Activated naive CD4-positive, alpha-beta T cell treated with anti-CD3 and anti-CD28 coated beads for 36 hours (primary cell): ENCODE measurements at regions of chr18 and their contacts with region 1.

Region 1: DNA sequence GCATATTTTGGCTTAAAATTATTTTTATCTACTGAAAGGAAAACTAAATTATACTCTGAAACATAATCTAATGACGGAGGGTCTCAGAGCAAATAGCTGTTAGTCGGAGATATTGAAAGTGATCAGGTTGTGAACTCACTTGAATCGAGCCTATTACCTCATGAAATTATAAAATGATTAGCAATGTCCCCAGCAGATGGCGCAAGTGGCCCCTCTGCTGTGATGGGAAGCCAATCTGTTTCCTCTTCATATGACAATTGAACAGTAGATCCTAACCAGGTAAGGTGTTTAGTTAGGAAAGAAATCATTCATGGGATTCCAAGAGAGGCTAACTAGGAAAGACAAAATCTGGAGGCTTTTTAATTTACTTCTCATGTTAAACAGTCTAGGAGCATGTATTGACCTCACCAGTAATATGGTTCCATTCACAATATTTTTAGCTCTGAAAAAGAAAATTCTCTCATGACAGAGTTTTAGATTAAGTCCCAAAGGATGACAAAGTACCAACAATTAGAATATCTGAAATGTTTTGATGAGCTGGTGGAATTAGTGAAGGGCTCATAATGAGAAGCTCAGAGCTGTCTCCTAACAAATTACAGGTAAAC is 29.9 kb upstream of the MPPE1 start:
- DNase-seq: peak; percentile 86
- H3K4me3 Mint-ChIP-seq: no peak overlapping the region
- H3K27ac Mint-ChIP-seq: no peak overlapping the region
- H3K4me1 Mint-ChIP-seq: no peaks in the 10 kb centered on the region
- H3K27me3 Mint-ChIP-seq: no peaks in the 10 kb centered on the region

Region 2: DNA sequence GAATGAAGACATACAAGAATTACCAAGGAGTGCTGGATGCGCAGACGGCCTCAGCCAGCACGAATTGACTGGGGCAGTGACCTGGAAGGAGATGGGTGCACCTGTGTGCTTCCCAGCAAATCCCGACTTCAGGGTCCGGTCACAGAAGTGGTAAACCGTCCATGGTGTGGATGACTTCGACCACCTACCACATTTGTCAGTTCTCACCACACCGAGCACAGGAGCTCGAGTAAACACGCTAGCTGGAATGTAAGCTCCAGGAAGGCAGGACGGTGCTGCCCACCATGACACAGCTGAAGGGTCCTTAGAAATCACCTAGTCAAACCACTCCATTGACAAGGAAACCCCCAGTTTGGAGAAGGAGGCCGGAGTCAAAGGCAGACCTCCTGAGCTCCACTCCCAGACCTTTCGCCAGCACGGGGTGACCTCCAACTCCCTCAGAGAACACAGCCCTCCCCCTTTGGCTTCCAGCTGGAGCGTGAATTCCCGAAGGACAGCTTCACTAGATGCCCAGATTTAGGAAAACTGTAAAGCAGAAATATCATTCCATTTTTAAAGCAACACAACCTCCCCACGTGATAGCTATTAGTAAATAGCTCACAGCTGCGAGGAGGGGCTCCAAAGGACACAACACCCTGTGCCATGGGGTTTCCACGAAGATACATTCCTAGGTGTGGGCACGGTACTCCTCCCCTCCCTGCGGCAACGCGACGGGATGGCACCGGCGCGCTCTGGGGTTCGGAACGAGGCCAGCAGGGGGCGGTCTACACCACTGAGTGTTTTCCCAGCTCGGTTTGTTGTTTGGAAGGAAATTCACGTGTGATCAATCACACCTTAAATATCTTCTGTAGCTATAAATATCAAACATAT is 283.0 kb before region 1 on chr18:
- CTCF ChIA-PET with region 1: interaction called, 8 read pairs
- intact Hi-C with region 1: loop called (anchors 5 kb)
- DNase-seq: peak; percentile 71
- H3K4me3 Mint-ChIP-seq: no peak overlapping the region
- H3K27ac Mint-ChIP-seq: no peak overlapping the region
- H3K4me1 Mint-ChIP-seq: peaks cover 6% of the 10 kb centered on the region
- H3K27me3 Mint-ChIP-seq: peaks cover 39% of the 10 kb centered on the region

Region 3: GRCh38 chr18:11676867-11677266 is 261.1 kb before region 1 on chr18:
- CTCF ChIA-PET with region 1: no interaction called
- intact Hi-C with region 1: no loop called
- DNase-seq: no peak
- H3K4me3 Mint-ChIP-seq: no peak overlapping the region
- H3K27ac Mint-ChIP-seq: no peak overlapping the region
- H3K4me1 Mint-ChIP-seq: no peaks in the 10 kb centered on the region
- H3K27me3 Mint-ChIP-seq: peaks cover 26% of the 10 kb centered on the region

Region 4: GRCh38 chr18:11752116-11752911 is 185.7 kb before region 1 on chr18:
- CTCF ChIA-PET with region 1: no interaction called
- intact Hi-C with region 1: no loop called
- DNase-seq: peak; percentile 46
- H3K4me3 Mint-ChIP-seq: peak overlapping the region; percentile 70
- H3K27ac Mint-ChIP-seq: no peak overlapping the region
- H3K4me1 Mint-ChIP-seq: peaks cover 9% of the 10 kb centered on the region
- H3K27me3 Mint-ChIP-seq: peaks cover 53% of the 10 kb centered on the region

Region 5: GRCh38 chr18:11785458-11786055 is 152.4 kb before region 1 on chr18:
- CTCF ChIA-PET with region 1: no interaction called
- intact Hi-C with region 1: no loop called
- DNase-seq: no peak
- H3K4me3 Mint-ChIP-seq: no peak overlapping the region
- H3K27ac Mint-ChIP-seq: no peak overlapping the region
- H3K4me1 Mint-ChIP-seq: no peaks in the 10 kb centered on the region
- H3K27me3 Mint-ChIP-seq: peaks cover 2% of the 10 kb centered on the region

Region 6: DNA sequence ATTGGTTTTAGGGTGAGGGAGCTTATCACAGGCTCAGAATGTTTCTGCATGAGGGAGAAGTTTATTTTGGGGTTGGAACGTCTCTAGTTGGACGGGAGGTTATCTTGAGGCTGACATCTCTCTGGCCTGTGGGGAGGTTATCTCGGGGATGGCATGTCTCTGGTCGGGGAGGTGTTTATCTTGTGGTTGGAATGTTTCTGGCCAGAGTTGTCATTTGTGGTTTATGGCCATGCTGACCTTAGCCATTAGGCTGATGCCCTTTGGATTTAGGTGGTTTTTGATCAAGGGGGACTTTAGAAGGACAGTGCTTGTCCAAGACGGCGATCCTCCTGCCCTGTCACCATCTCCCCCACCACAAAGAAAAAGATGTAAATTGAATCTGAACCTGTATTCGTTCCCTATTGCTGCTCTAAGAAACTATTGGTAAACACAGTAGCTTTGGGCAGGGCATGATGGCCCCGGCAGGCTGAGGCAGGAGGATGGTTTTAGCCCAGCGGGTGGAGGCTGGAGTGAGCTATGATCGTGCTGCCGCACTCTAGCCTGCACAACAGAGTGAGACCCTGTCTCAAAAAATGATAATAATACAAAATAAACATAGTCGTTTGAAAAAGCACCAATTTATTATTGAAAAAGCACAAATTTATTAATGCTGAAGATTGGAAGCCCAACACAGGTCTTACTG is 12.0 kb before region 1 on chr18:
- CTCF ChIA-PET with region 1: interaction called, 25 read pairs
- intact Hi-C with region 1: no loop called
- DNase-seq: no peak
- H3K4me3 Mint-ChIP-seq: no peak overlapping the region
- H3K27ac Mint-ChIP-seq: no peak overlapping the region
- H3K4me1 Mint-ChIP-seq: no peaks in the 10 kb centered on the region
- H3K27me3 Mint-ChIP-seq: no peaks in the 10 kb centered on the region

Region 7: DNA sequence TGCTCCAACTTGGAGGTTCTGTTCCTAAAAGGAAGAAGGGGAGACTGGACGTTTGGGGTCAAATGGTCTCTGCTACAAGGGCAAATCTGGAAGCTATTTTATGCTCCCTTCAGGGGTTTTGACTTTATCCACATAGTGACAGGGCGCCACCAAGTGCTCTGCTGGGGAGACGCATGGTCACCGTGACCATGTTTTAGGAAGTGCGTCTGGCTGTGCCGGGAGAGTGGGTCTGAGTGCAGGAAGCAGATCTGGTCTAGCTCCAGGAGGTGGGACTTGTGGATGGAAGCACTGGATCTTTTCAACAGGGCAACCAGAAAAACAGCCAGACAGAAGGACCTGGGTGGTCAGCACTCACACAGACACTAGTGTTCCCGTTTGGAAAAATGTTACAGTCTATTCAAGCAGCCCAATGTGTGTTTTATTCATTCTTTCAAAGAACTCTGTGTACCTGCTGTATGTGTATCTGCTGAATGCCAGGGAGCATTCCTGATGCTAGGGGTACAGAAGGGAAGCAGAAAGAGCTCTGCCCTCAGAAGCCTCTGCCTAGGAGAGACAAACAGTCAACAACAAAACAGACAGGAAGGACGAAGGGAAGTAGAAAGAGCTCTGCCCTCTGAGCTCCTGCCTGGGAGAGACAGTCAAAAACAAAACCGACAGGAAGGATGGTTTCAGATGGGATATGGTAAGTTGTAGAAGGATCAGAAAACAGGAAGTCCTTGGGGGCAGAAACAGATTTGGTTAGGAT is 57.6 kb after region 1 on chr18:
- CTCF ChIA-PET with region 1: interaction called, 234 read pairs
- intact Hi-C with region 1: loop called (anchors 1 kb)
- DNase-seq: peak; percentile 74
- H3K4me3 Mint-ChIP-seq: no peak overlapping the region
- H3K27ac Mint-ChIP-seq: no peak overlapping the region
- H3K4me1 Mint-ChIP-seq: peaks cover 8% of the 10 kb centered on the region
- H3K27me3 Mint-ChIP-seq: no peaks in the 10 kb centered on the region

Region 8: GRCh38 chr18:12038639-12039417 is 100.9 kb after region 1 on chr18:
- CTCF ChIA-PET with region 1: interaction called, 115 read pairs
- intact Hi-C with region 1: loop called (anchors 1 kb)
- DNase-seq: peak; percentile 76
- H3K4me3 Mint-ChIP-seq: peak overlapping the region; percentile 48
- H3K27ac Mint-ChIP-seq: no peak overlapping the region
- H3K4me1 Mint-ChIP-seq: peaks cover 10% of the 10 kb centered on the region
- H3K27me3 Mint-ChIP-seq: peaks cover 5% of the 10 kb centered on the region

Region 9: DNA sequence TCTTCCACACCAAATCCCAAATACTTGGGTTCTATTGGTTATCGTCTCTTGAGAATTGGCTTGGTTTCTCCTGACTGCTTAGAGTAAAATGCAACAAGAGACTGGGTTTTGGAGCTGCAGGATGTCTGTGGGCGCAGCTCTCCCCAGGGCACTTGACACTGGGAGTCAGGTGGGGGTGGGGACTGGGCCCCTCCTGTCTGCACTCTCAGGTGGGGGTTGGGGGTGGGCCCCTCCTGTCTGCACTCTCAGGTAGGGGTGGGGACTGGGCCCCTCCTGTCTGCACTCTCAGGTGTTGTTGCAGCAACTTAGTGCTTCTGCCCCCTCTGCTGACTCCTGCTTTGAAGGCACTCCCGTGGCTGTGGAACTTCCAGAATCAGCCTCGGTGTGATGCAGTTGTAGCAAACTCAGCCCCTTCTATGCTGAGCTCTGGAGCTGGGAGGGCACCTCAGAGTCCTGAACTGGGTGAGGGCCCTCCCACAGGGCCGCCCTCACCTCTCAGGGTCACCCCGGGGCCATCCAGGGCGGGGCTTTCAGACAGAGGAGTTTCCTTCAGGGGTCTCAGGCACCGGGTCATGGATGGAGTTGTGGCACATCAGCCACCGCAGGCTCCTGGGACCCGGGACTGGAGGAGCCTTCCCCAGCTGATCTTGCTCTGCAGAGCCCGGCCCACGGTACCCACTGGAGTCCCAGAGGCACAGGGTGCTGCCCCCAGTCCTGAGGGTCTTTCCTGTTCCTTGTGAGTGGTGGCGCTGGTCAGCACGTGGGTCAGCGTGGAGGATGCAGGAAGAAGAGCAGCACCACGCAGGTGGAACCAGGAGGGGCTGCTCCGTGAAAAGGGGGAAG is 293.3 kb after region 1 on chr18:
- CTCF ChIA-PET with region 1: no interaction called
- intact Hi-C with region 1: no loop called
- DNase-seq: no peak
- H3K4me3 Mint-ChIP-seq: no peak overlapping the region
- H3K27ac Mint-ChIP-seq: no peak overlapping the region
- H3K4me1 Mint-ChIP-seq: no peaks in the 10 kb centered on the region
- H3K27me3 Mint-ChIP-seq: no peaks in the 10 kb centered on the region